ENCODE measurements at regions of chrX and their contacts with region 1.

Region 1: GRCh38 chrX:77899081-77899828 is at the start of gene COX7B:
- DNase-seq: peak; percentile 91
- H3K4me3 Mint-ChIP-seq: peak within 1 kb of the TSS; percentile 90
- H3K27ac Mint-ChIP-seq: peak within 1 kb of the TSS; percentile 97
- H3K4me1 Mint-ChIP-seq: peaks cover 9% of the 10 kb centered on the region
- H3K27me3 Mint-ChIP-seq: no peaks in the 10 kb centered on the region
- total RNA-seq, gene COX7B: 281 and 301 TPM in 2 replicates

Region 2: GRCh38 chrX:76427560-76428242 is 1471.6 kb before region 1 on chrX and contains the start of gene MAGEE1:
- intact Hi-C with region 1: loop called (anchors 10 kb)
- DNase-seq: peak; percentile 92
- H3K4me3 Mint-ChIP-seq: peak within 1 kb of the TSS; percentile 88
- H3K27ac Mint-ChIP-seq: peak within 1 kb of the TSS; percentile 83
- H3K4me1 Mint-ChIP-seq: peaks cover 7% of the 10 kb centered on the region
- H3K27me3 Mint-ChIP-seq: no peaks in the 10 kb centered on the region
- total RNA-seq, gene MAGEE1: 1.8 and 2.0 TPM in 2 replicates

Region 3: GRCh38 chrX:77009691-77010090 is 889.6 kb before region 1 on chrX:
- intact Hi-C with region 1: loop called (anchors 10 kb)
- DNase-seq: no peak
- H3K4me3 Mint-ChIP-seq: no peak overlapping the region
- H3K27ac Mint-ChIP-seq: no peak overlapping the region
- H3K4me1 Mint-ChIP-seq: peaks cover 5% of the 10 kb centered on the region
- H3K27me3 Mint-ChIP-seq: no peaks in the 10 kb centered on the region

Region 4: GRCh38 chrX:77160301-77160700 is 739.0 kb before region 1 on chrX:
- intact Hi-C with region 1: loop called (anchors 5 kb)
- DNase-seq: peak; percentile 62
- H3K4me3 Mint-ChIP-seq: no peak overlapping the region
- H3K27ac Mint-ChIP-seq: no peak overlapping the region
- H3K4me1 Mint-ChIP-seq: no peaks in the 10 kb centered on the region
- H3K27me3 Mint-ChIP-seq: no peaks in the 10 kb centered on the region

Region 5: GRCh38 chrX:77785486-77786364 is 113.5 kb before region 1 on chrX and contains the start of gene ATRX:
- intact Hi-C with region 1: loop called (anchors 1 kb)
- DNase-seq: peak; percentile 92
- H3K4me3 Mint-ChIP-seq: peak within 1 kb of the TSS; percentile 99
- H3K27ac Mint-ChIP-seq: peak within 1 kb of the TSS; percentile 100
- H3K4me1 Mint-ChIP-seq: peaks cover 15% of the 10 kb centered on the region
- H3K27me3 Mint-ChIP-seq: no peaks in the 10 kb centered on the region
- total RNA-seq, gene ATRX: 62.3 and 72.9 TPM in 2 replicates

Region 6: GRCh38 chrX:77910108-77910840 is 11.0 kb after region 1 on chrX and contains the start of gene ATP7A:
- intact Hi-C with region 1: loop called (anchors 1 kb)
- DNase-seq: peak; percentile 96
- H3K4me3 Mint-ChIP-seq: peak within 1 kb of the TSS; percentile 96
- H3K27ac Mint-ChIP-seq: peak within 1 kb of the TSS; percentile 99
- H3K4me1 Mint-ChIP-seq: peaks cover 10% of the 10 kb centered on the region
- H3K27me3 Mint-ChIP-seq: no peaks in the 10 kb centered on the region
- total RNA-seq, gene ATP7A: 7.6 and 8.1 TPM in 2 replicates

Region 7: GRCh38 chrX:78066110-78066509 is 166.9 kb after region 1 on chrX:
- intact Hi-C with region 1: loop called (anchors 1 kb)
- DNase-seq: no peak
- H3K4me3 Mint-ChIP-seq: no peak overlapping the region
- H3K27ac Mint-ChIP-seq: no peak overlapping the region
- H3K4me1 Mint-ChIP-seq: peaks cover 13% of the 10 kb centered on the region
- H3K27me3 Mint-ChIP-seq: no peaks in the 10 kb centered on the region

Region 8: DNA sequence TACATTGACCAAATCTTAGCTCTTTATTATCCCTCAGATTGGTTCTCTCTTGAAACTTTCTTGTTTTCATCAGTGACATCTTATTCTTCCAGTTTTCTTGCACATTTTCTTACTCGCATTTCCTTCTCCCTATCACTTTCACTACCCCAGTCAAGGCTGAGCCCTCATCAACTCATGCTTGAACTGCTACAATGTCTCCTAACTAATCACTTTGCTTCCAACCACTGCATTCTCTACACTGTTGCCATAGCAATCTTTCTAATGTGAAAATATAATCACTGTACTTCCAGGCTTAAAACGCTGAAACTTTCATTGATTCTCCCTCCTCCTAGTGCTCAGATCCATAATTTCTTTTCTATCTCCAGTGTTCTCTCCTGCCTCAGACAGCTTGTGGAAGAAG is 826.0 kb after region 1 on chrX:
- intact Hi-C with region 1: no loop called
- DNase-seq: no peak
- H3K4me3 Mint-ChIP-seq: no peak overlapping the region
- H3K27ac Mint-ChIP-seq: no peak overlapping the region
- H3K4me1 Mint-ChIP-seq: no peaks in the 10 kb centered on the region
- H3K27me3 Mint-ChIP-seq: peaks cover 2% of the 10 kb centered on the region

Measured in activated CD4-positive, alpha-beta T cell treated with anti-CD3 and anti-CD28 coated beads, Interleukin-2, amount 10 ng/mL, durations not matched to agents 24 days and 14 days (primary cell).